ENCODE measurements at regions of chr9 and their contacts with region 1.

Region 1: GRCh38 chr9:34430843-34431437 is 27.4 kb downstream of the FAM219A start:
- DNase-seq: peak; percentile 85
- ATAC-seq: peak; percentile 91
- H3K4me3 ChIP-seq: no peak overlapping the region
- H3K27ac ChIP-seq: no peak overlapping the region
- H3K4me1 ChIP-seq: peaks cover 4% of the 10 kb centered on the region
- H3K27me3 ChIP-seq: no peaks in the 10 kb centered on the region
- CTCF ChIP-seq: no peak
- POLR2A ChIP-seq: no peak
- RAD21 ChIP-seq: no peak

Region 2: DNA sequence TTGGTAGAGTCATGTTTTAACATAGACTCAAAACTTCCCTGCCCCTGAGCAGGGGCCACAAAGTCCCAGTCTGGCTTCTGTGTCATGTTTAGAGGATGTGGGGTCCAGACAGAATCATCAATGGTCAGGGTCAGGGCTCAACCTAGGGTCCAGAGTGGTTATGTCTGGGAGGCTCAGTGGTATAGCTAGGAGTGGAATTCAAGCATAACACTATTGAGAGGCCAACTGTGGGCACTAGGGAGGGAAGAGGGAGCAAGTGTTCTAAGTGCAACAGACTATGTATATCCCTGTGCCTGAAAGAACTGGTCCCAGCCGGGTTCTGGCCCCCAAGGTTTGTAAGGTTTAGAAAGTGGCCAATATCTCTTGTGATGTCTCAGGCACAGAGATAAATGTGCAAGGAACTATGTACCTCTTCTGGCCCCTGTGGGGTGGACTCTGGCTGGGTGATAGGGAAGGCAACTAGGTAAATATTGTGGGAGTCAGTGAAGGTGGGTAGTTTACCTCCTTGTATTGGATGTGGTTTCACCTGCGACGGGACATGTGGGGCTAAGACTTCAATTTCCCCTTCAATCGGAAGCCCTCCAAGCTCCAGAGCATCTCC is 68.2 kb before region 1 on chr9:
- CTCF ChIA-PET with region 1: no interaction called
- POLR2A ChIA-PET with region 1: no interaction called
- dilution Hi-C with region 1: no loop called
- in situ Hi-C with region 1: no loop called
- intact Hi-C with region 1: no loop called
- DNase-seq: no peak
- ATAC-seq: no peak
- H3K4me3 ChIP-seq: no peak overlapping the region
- H3K27ac ChIP-seq: no peak overlapping the region
- H3K4me1 ChIP-seq: no peaks in the 10 kb centered on the region
- H3K27me3 ChIP-seq: 0 out of 2 replicates have a peak, but pooled peaks cover 2% of the 10 kb centered on the region
- CTCF ChIP-seq: no peak
- POLR2A ChIP-seq: no peak
- RAD21 ChIP-seq: no peak

Region 3: GRCh38 chr9:34413231-34413852 is 17.6 kb before region 1 on chr9:
- CTCF ChIA-PET with region 1: no interaction called
- POLR2A ChIA-PET with region 1: no interaction called
- dilution Hi-C with region 1: no loop called
- in situ Hi-C with region 1: no loop called
- intact Hi-C with region 1: loop called (anchors 1 kb)
- DNase-seq: peak; percentile 43
- ATAC-seq: peak; percentile 83
- H3K4me3 ChIP-seq: no peak overlapping the region
- H3K27ac ChIP-seq: no peak overlapping the region
- H3K4me1 ChIP-seq: no peaks in the 10 kb centered on the region
- H3K27me3 ChIP-seq: no peaks in the 10 kb centered on the region
- CTCF ChIP-seq: no peak
- POLR2A ChIP-seq: no peak
- RAD21 ChIP-seq: no peak